ENCODE measurements at regions of chr9 and their contacts with region 1.

Region 1: GRCh38 chr9:125558453-125559092 is 148.4 kb downstream of the MAPKAP1 start:
- DNase-seq: peak; percentile 37 to 57
- ATAC-seq: peak; percentile 87

Region 2: DNA sequence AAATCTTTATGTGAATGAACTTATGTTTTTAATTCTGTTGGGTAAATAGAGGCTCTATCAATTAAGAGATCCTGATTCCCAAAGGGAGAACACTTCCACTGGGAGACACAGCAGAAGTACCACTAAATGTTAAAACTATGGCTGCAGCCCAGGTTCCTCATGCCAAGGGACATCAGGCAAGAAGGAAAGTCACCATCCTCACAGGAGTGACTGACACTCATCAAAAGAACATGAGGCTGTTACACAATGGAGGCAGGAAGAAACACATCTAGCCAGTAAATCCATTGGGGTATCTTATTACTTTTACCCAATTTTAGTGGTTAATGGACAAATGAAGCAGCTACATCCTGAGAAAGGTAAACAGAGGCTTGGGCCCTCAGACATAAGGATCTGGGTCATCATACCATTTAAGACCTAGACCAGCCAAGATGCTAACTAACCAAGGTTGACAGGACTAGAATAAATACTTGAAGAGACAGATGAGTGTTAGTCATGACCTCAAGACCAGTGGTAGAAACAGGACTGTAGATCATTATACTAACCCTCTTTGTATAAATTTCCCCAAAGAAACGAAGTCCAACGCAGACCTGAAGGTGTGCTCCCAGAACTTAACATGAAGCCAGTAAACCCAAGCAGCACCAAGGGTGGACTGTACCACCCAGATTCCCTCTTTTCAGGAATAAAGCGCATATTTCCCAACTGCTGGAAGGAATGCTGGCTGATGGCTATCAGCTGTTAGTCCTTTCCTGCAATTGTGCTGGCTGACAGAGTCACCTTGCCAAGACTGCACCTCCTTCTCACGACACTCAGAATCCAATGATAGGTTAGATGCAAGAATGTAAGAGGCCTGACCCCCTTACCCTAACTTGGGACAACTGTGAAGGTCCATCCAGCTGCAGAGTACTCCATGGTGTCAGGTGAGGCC is 54.3 kb after region 1 on chr9:
- intact Hi-C with region 1: no loop called
- DNase-seq: no peak
- ATAC-seq: no peak

Region 3: GRCh38 chr9:125631391-125632085 is 73.0 kb after region 1 on chr9:
- intact Hi-C with region 1: loop called in 1 of 2 experiments (anchors 5 kb)
- DNase-seq: peak in 1 of 2 donors; percentile 19
- ATAC-seq: peak; percentile 84

Region 4: GRCh38 chr9:125746017-125746773 is 187.6 kb after region 1 on chr9:
- intact Hi-C with region 1: loop called in 1 of 2 experiments (anchors 10 kb)
- DNase-seq: peak; percentile 95
- ATAC-seq: peak; percentile 92

Region 5: GRCh38 chr9:125959951-125960619 is 401.5 kb after region 1 on chr9:
- intact Hi-C with region 1: no loop called
- DNase-seq: no peak
- ATAC-seq: no peak

Measured in left colon (tissue), 2 donors.